Naive thymus-derived CD4-positive, alpha-beta T cell (primary cell): ENCODE measurements at regions of chr1 and their contacts with region 1.

Region 1: DNA sequence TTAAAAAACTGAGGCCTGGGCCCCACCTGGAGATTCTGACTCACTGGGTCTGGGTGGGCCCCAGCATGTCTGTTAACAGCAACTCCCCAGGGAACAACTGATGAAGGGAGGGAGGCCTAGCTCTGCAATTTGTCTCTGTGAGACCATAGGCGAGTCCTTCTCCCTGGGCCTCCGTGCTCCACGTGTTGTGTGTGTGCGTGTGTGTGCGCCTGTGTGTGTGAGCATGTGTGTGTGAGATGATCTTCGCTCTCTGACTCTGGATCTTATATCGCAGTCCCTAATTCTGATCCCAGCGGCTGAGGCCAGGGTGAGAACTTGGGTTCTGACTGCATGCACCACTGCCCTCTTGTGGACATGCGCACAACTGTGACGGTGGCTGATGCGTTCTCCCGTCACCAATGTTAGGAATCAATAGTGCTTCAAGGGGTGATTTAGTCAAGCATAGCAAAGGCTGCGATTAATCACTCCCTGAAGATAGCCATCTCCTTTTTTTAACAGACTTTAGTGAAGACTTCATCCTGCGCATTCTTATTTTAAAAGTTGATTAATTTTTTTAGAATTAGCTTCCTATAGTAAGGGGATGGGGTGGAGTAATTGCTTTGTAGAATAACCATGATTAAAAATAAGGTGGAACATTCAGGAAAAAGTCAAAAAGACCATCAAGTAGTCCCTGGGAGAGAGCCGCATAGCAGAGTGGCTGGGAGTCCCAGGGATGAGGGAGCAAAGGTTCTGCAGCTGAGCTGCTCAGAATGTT is 62.4 kb upstream of the USP24 start:
- DNase-seq: peak; percentile 50 to 74 (median 70)
- ATAC-seq: peak; percentile 96
- H3K4me3 ChIP-seq: no peak overlapping the region
- H3K4me3 Mint-ChIP-seq: peak overlapping the region in 2 of 10 donors; percentile 27 to 59
- H3K27ac ChIP-seq: no peak overlapping the region
- H3K27ac Mint-ChIP-seq: peak overlapping the region in 5 of 9 donors; percentile 21 to 81 (median 55)
- H3K4me1 ChIP-seq: peaks cover 0 to 4% of the 10 kb centered on the region in 2 donors
- H3K4me1 Mint-ChIP-seq: peaks cover 4 to 20% (median 8%) of the 10 kb centered on the region in 7 donors
- H3K27me3 ChIP-seq: no peaks in the 10 kb centered on the region
- H3K27me3 Mint-ChIP-seq: peaks cover 0 to 11% (median 0%) of the 10 kb centered on the region in 5 donors

Region 2: GRCh38 chr1:54944610-54945544 is 332.7 kb before region 1 on chr1:
- CTCF ChIA-PET with region 1: no interaction called
- POLR2A ChIA-PET with region 1: no interaction called
- intact Hi-C with region 1: loop called in 1 of 2 experiments (anchors 5 kb)
- DNase-seq: peak; percentile 17 to 61 (median 45)
- ATAC-seq: peak; percentile 80
- H3K4me3 ChIP-seq: no peak overlapping the region
- H3K4me3 Mint-ChIP-seq: peak overlapping the region in 1 of 10 donors; percentile 28
- H3K27ac ChIP-seq: no peak overlapping the region
- H3K27ac Mint-ChIP-seq: no peak overlapping the region
- H3K4me1 ChIP-seq: peaks cover 3 to 7% of the 10 kb centered on the region in 2 donors
- H3K4me1 Mint-ChIP-seq: peaks cover 9 to 16% (median 11%) of the 10 kb centered on the region in 7 donors
- H3K27me3 ChIP-seq: no peaks in the 10 kb centered on the region
- H3K27me3 Mint-ChIP-seq: peaks cover 0 to 11% (median 0%) of the 10 kb centered on the region in 5 donors

Region 3: DNA sequence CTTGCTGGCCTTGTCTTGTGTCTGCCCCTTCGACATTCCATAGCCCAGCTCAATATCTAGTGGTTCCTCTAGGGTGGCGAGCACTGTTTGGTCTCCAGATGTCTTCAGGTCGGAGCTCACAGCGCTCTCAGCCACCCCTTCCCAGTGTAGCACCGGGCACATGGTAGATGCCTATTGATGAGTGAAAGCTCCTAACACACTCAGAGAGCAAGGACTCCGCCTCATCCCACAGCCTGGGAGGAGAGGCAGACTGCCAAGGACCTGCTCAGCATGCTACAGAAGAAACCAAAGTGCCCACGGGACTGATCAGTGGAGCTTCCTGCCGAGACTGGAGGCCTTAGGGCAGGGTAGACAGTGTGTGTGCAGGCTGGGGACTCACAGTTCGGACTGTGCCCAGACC is 227.3 kb before region 1 on chr1:
- CTCF ChIA-PET with region 1: no interaction called
- POLR2A ChIA-PET with region 1: no interaction called
- intact Hi-C with region 1: no loop called
- DNase-seq: no peak
- ATAC-seq: no peak
- H3K4me3 ChIP-seq: no peak overlapping the region
- H3K4me3 Mint-ChIP-seq: no peak overlapping the region
- H3K27ac ChIP-seq: no peak overlapping the region
- H3K27ac Mint-ChIP-seq: no peak overlapping the region
- H3K4me1 ChIP-seq: no peaks in the 10 kb centered on the region
- H3K4me1 Mint-ChIP-seq: no peaks in the 10 kb centered on the region
- H3K27me3 ChIP-seq: no peaks in the 10 kb centered on the region
- H3K27me3 Mint-ChIP-seq: peaks cover 0 to 3% (median 0%) of the 10 kb centered on the region in 5 donors

Region 4: DNA sequence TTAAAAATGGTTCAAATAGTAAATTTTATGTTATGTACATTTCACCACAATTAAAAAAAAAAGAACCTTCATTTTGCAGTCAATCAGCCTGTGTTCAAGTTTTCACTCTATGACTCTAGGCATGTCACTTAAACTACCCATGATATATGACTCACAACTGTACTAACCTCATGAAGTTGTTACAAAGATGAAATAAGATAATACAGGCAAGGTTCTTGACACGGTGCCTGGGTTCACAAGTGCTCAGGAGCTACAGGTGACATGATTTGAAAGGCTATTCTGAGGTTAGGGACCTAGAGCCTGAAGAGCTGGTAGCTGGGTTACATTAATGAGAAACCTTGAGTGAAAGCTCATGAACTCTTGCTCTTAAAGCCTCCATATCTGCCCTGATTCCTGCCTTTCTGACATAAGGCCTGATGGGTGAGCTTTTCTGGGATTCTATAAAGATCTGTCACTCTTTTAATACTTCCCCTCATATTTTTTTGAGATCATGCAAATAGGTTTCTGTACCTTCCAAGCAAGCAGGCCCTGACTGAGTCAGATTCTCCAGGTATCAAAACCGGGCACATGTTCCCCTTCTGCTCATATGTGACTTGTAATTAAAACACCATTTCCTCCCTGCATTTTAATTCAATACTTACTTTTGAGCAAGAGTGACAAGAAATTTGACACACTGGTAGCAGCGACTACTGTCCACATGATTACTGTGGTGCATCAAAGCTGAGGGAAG is 204.2 kb before region 1 on chr1:
- CTCF ChIA-PET with region 1: no interaction called
- POLR2A ChIA-PET with region 1: no interaction called
- intact Hi-C with region 1: loop called in 1 of 2 experiments (anchors 2 kb)
- DNase-seq: no peak
- ATAC-seq: no peak
- H3K4me3 ChIP-seq: no peak overlapping the region
- H3K4me3 Mint-ChIP-seq: no peak overlapping the region
- H3K27ac ChIP-seq: no peak overlapping the region
- H3K27ac Mint-ChIP-seq: peak overlapping the region in 6 of 9 donors; percentile 4 to 70 (median 30)
- H3K4me1 ChIP-seq: no peaks in the 10 kb centered on the region
- H3K4me1 Mint-ChIP-seq: peaks cover 0 to 16% (median 0%) of the 10 kb centered on the region in 7 donors
- H3K27me3 ChIP-seq: no peaks in the 10 kb centered on the region
- H3K27me3 Mint-ChIP-seq: no peaks in the 10 kb centered on the region

Region 5: GRCh38 chr1:55140546-55140983 is 137.0 kb before region 1 on chr1:
- CTCF ChIA-PET with region 1: interaction called, 78 read pairs
- POLR2A ChIA-PET with region 1: interaction called, 3 read pairs
- intact Hi-C with region 1: loop called (anchors 1 kb)
- DNase-seq: peak in 8 of 9 donors; percentile 51 to 79 (median 71)
- ATAC-seq: peak; percentile 97
- H3K4me3 ChIP-seq: no peak overlapping the region
- H3K4me3 Mint-ChIP-seq: peak overlapping the region in 1 of 10 donors; percentile 53
- H3K27ac ChIP-seq: no peak overlapping the region
- H3K27ac Mint-ChIP-seq: peak overlapping the region in 8 of 9 donors; percentile 55 to 76 (median 65)
- H3K4me1 ChIP-seq: peaks cover 0 to 5% of the 10 kb centered on the region in 2 donors
- H3K4me1 Mint-ChIP-seq: peaks cover 0 to 18% (median 12%) of the 10 kb centered on the region in 7 donors
- H3K27me3 ChIP-seq: no peaks in the 10 kb centered on the region
- H3K27me3 Mint-ChIP-seq: no peaks in the 10 kb centered on the region

Region 6: DNA sequence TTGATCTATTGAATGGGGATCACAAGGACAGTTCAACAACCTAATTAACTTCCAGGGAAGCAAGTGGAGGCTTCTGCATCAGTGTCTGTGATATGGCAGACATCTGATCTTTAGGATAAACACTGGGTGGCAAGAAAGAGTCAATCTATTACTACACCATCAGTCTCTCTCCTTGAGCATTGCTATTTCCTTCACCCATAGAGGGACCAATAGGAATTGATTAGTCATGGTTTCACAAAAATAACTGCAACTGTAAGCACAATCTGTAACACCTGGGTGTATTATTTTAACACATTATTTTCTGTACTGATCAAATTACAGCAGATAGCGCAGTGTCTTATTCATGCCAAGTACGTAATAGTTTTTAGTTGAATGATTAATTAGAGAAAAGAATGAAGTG is 112.6 kb before region 1 on chr1:
- CTCF ChIA-PET with region 1: interaction called, 3 read pairs
- POLR2A ChIA-PET with region 1: no interaction called
- intact Hi-C with region 1: loop called in 1 of 2 experiments (anchors 1 kb)
- DNase-seq: no peak
- ATAC-seq: no peak
- H3K4me3 ChIP-seq: no peak overlapping the region
- H3K4me3 Mint-ChIP-seq: no peak overlapping the region
- H3K27ac ChIP-seq: no peak overlapping the region
- H3K27ac Mint-ChIP-seq: peak overlapping the region in 4 of 9 donors; percentile 7 to 48 (median 20)
- H3K4me1 ChIP-seq: no peaks in the 10 kb centered on the region
- H3K4me1 Mint-ChIP-seq: peaks cover 0 to 20% (median 18%) of the 10 kb centered on the region in 7 donors
- H3K27me3 ChIP-seq: no peaks in the 10 kb centered on the region
- H3K27me3 Mint-ChIP-seq: no peaks in the 10 kb centered on the region

Region 7: GRCh38 chr1:55257958-55258357 is 19.6 kb before region 1 on chr1:
- CTCF ChIA-PET with region 1: interaction called, 3 read pairs
- POLR2A ChIA-PET with region 1: no interaction called
- intact Hi-C with region 1: loop called in 1 of 2 experiments (anchors 2 kb)
- DNase-seq: peak; percentile 19 to 73 (median 64)
- ATAC-seq: peak; percentile 92
- H3K4me3 ChIP-seq: no peak overlapping the region
- H3K4me3 Mint-ChIP-seq: peak overlapping the region in 2 of 10 donors; percentile 14 to 15
- H3K27ac ChIP-seq: no peak overlapping the region
- H3K27ac Mint-ChIP-seq: peak overlapping the region in 7 of 9 donors; percentile 20 to 80 (median 52)
- H3K4me1 ChIP-seq: peaks cover 0 to 10% of the 10 kb centered on the region in 2 donors
- H3K4me1 Mint-ChIP-seq: peaks cover 11 to 17% (median 14%) of the 10 kb centered on the region in 7 donors
- H3K27me3 ChIP-seq: no peaks in the 10 kb centered on the region
- H3K27me3 Mint-ChIP-seq: peaks cover 0 to 16% (median 0%) of the 10 kb centered on the region in 5 donors

Region 8: DNA sequence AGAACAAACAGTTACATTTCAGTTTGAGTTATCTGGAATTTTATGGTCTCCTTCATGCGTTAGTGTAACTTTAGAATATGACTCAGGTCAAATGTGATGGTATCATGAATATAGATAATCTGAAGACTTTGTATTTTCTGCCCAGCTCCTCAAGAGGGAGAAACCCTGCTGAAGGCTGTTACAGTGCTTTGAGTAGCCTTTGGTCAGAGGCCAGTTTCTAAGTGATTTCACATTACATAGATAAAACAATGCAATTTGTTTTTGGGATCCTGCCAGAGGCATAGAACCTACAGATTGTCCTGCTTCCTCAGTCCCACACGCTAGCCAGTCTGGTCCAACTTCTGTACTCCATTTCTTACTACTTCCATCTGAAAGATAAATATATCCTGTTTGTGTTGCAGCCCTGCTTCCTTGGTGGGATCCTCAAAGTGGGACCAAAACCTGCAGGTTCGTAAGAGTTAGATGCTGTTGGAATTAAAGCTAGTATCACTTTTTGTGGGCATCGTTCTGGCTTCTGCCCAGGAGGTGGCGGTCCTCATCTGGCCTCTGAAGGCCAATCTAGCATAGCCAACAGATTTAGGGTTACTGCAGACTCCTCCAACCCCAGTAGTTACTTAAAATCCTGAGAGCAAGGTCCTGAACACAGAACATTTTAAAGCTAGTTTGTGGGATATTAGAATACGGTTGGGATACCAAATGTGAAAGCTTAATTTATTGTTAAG is 583.4 kb after region 1 on chr1:
- CTCF ChIA-PET with region 1: no interaction called
- POLR2A ChIA-PET with region 1: no interaction called
- intact Hi-C with region 1: no loop called
- DNase-seq: no peak
- ATAC-seq: no peak
- H3K4me3 ChIP-seq: no peak overlapping the region
- H3K4me3 Mint-ChIP-seq: no peak overlapping the region
- H3K27ac ChIP-seq: no peak overlapping the region
- H3K27ac Mint-ChIP-seq: no peak overlapping the region
- H3K4me1 ChIP-seq: no peaks in the 10 kb centered on the region
- H3K4me1 Mint-ChIP-seq: no peaks in the 10 kb centered on the region
- H3K27me3 ChIP-seq: no peaks in the 10 kb centered on the region
- H3K27me3 Mint-ChIP-seq: peaks cover 0 to 12% (median 0%) of the 10 kb centered on the region in 5 donors